Lower leg skin (tissue), 4 donors: ENCODE measurements at regions of chr20 and their contacts with region 1.

Region 1: DNA sequence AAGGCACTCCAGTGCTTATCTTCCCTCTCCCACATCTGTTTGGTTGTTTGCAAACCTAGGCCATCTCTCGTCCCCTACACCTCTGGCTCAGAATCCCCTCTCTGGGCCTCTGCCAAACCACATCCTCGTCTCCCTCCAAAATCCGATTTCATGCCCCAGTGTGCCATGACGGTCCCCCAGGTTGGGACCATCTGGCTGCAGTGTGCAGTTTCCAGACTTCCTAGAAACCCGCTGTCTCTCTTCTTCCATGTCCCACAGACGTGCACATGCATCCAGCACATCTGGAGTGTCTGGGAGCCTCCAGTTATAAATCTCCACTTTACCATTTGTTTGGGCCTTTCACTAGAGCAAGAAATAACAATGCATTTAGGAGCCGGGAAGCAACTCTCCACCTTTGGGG is 316.2 kb downstream of the KIF16B start:
- DNase-seq: no peak
- H3K4me3 ChIP-seq: no peak overlapping the region
- CTCF ChIP-seq: no peak
- POLR2A ChIP-seq: no peak

Region 2: DNA sequence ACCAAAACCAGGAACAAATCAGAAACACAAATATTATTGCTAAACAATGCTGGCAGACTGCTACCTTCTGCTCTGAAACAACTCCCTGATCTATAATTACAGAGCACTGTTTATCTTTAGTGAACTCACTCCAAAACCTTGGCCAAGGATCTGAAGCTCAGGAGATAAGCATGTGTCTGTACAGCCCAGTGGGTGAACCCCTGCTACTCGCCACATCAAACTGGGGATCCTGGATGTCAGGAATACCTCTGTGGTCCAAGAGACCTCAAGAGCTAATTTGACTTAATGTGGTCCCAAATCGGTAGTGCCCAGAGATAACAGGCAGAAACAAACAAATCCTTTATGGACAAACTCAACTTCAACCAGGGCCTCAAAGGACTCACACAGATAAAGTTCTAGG is 65.5 kb before region 1 on chr20:
- intact Hi-C with region 1: loop called (anchors 10 kb)
- DNase-seq: no peak
- H3K4me3 ChIP-seq: no peak overlapping the region
- CTCF ChIP-seq: no peak
- POLR2A ChIP-seq: no peak

Region 3: DNA sequence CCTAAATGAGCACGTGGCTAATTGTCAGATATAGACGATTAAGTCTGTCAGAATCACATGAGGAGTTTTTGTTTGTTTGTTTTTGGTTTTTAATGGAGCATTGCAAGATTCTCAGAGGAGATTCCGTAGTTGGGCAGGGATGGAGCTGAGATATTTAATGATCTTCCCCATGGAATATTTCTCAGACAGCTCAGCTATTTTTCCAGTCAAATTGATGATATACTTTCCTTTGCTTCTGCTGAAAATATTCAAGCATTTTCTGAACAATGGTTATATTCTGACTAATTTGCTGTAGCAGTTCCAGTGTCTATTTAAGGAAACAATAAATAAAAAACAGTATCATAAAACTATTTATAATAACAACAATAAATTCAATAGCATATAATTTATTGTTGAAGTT is 32.2 kb before region 1 on chr20:
- intact Hi-C with region 1: no loop called
- DNase-seq: no peak
- H3K4me3 ChIP-seq: no peak overlapping the region
- CTCF ChIP-seq: no peak
- POLR2A ChIP-seq: no peak